ENCODE measurements at regions of chr13 and their contacts with region 1.

Region 1: DNA sequence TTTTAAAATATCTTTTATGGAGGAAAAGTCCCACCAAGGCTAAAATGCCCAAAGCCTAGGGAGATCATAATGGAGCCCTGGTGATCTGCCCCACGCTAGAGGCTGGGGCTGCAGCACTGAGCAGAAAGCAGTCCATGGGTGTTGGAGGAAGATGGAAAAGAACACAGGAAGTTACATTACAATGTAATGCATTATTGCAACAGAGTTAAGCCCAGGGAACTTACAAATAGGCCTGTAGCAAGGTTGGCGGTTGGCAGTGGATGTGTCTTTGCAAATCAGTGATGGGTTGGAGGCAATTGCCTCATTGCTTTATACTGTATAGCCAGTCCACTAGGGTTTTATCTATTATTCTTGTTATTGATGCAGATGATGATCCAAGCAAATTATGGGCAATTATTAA is 399.9 kb downstream of the NDFIP2 start:
- DNase-seq: no peak
- ATAC-seq: no peak
- H3K4me3 ChIP-seq: no peak overlapping the region
- H3K4me3 Mint-ChIP-seq: no peak overlapping the region
- H3K27ac ChIP-seq: no peak overlapping the region
- H3K27ac Mint-ChIP-seq: no peak overlapping the region
- H3K4me1 ChIP-seq: no peaks in the 10 kb centered on the region
- H3K4me1 Mint-ChIP-seq: no peaks in the 10 kb centered on the region
- H3K27me3 ChIP-seq: no peaks in the 10 kb centered on the region
- H3K27me3 Mint-ChIP-seq: no peaks in the 10 kb centered on the region
- CTCF ChIP-seq: no peak

Region 2: GRCh38 chr13:79692846-79693245 is 188.0 kb before region 1 on chr13:
- CTCF ChIA-PET with region 1: no interaction called
- POLR2A ChIA-PET with region 1: no interaction called
- intact Hi-C with region 1: no loop called
- DNase-seq: no peak
- ATAC-seq: no peak
- H3K4me3 ChIP-seq: no peak overlapping the region
- H3K4me3 Mint-ChIP-seq: no peak overlapping the region
- H3K27ac ChIP-seq: no peak overlapping the region
- H3K27ac Mint-ChIP-seq: no peak overlapping the region
- H3K4me1 ChIP-seq: no peaks in the 10 kb centered on the region
- H3K4me1 Mint-ChIP-seq: no peaks in the 10 kb centered on the region
- H3K27me3 ChIP-seq: no peaks in the 10 kb centered on the region
- H3K27me3 Mint-ChIP-seq: peaks cover 4% of the 10 kb centered on the region
- CTCF ChIP-seq: no peak

Region 3: GRCh38 chr13:79939689-79940088 is 58.9 kb after region 1 on chr13:
- CTCF ChIA-PET with region 1: no interaction called
- POLR2A ChIA-PET with region 1: no interaction called
- intact Hi-C with region 1: loop called in 1 of 2 experiments (anchors 10 kb)
- DNase-seq: no peak
- ATAC-seq: no peak
- H3K4me3 ChIP-seq: no peak overlapping the region
- H3K4me3 Mint-ChIP-seq: no peak overlapping the region
- H3K27ac ChIP-seq: no peak overlapping the region
- H3K27ac Mint-ChIP-seq: no peak overlapping the region
- H3K4me1 ChIP-seq: no peaks in the 10 kb centered on the region
- H3K4me1 Mint-ChIP-seq: no peaks in the 10 kb centered on the region
- H3K27me3 ChIP-seq: no peaks in the 10 kb centered on the region
- H3K27me3 Mint-ChIP-seq: no peaks in the 10 kb centered on the region
- CTCF ChIP-seq: no peak

Measured in CD8-positive, alpha-beta T cell (primary cell).